Aorta (tissue), 5 donors: ENCODE measurements at regions of chr5 and their contacts with region 1.

Region 1: GRCh38 chr5:146426853-146427618 is 20.1 kb upstream of the TCERG1 start:
- DNase-seq: no peak
- ATAC-seq: peak; percentile 70
- H3K4me3 ChIP-seq: no peak overlapping the region
- H3K27ac ChIP-seq: peak overlapping the region in 1 of 2 donors; percentile 6
- H3K4me1 ChIP-seq: no peaks in the 10 kb centered on the region
- H3K27me3 ChIP-seq: peaks cover 0 to 5% of the 10 kb centered on the region in 2 donors

Region 2: DNA sequence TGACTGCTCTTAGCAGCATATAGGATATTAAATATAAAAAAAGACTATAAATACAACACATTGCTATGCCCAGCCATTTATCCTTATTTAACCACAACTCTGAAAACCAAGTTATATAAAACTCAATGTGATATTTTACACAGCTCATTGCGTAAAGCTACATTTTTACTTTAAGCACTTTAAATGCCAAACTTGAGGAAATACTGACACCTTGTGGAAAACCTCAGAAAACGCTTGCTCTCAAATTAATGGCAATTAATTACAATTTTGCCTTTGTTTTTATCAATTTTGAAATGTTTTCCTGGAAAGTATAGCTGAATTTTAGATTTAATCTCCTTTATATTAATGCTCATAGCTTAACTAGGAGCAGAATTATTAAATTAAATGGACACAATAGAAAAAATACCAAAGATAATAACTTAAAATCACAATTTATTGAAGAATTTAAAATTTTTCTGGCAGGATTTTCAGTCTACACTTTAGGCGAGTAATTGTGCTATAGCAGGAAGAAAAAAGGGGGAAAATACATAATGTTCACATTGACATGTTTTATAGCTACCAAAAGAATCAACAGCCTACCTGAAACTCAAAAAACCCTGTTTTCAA is 296.5 kb before region 1 on chr5:
- intact Hi-C with region 1: loop called in 1 of 2 experiments (anchors 10 kb)
- DNase-seq: no peak
- ATAC-seq: no peak
- H3K4me3 ChIP-seq: no peak overlapping the region
- H3K27ac ChIP-seq: no peak overlapping the region
- H3K4me1 ChIP-seq: no peaks in the 10 kb centered on the region
- H3K27me3 ChIP-seq: no peaks in the 10 kb centered on the region

Region 3: GRCh38 chr5:146137967-146138403 is 289.1 kb before region 1 on chr5:
- intact Hi-C with region 1: loop called (anchors 10 kb)
- DNase-seq: no peak
- ATAC-seq: no peak
- H3K4me3 ChIP-seq: no peak overlapping the region
- H3K27ac ChIP-seq: no peak overlapping the region
- H3K4me1 ChIP-seq: no peaks in the 10 kb centered on the region
- H3K27me3 ChIP-seq: no peaks in the 10 kb centered on the region

Region 4: DNA sequence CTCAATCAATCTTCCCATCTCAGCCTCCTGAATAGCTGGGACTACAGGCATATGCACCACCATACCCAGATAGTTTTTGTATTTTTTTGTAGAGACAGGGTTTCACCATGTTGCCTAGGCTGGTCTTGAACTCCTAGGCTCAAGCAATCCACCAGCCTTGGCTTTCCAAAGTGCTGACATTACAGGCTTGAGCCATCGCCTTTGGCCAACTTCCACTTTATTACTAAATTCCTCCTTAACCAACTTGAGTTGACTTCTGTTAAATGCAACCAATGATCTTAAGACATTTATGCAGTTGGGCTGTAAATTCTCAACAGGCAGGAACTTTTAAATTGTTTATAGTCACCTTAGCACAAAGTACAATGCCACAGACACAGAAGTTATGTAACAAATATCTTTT is 247.3 kb before region 1 on chr5:
- intact Hi-C with region 1: loop called (anchors 5 to 10 kb)
- DNase-seq: no peak
- ATAC-seq: no peak
- H3K4me3 ChIP-seq: no peak overlapping the region
- H3K27ac ChIP-seq: no peak overlapping the region
- H3K4me1 ChIP-seq: peaks cover 1 to 3% of the 10 kb centered on the region in 2 donors
- H3K27me3 ChIP-seq: no peaks in the 10 kb centered on the region

Region 5: GRCh38 chr5:146188358-146188757 is 238.7 kb before region 1 on chr5:
- intact Hi-C with region 1: loop called (anchors 5 to 10 kb)
- DNase-seq: no peak
- ATAC-seq: no peak
- H3K4me3 ChIP-seq: no peak overlapping the region
- H3K27ac ChIP-seq: no peak overlapping the region
- H3K4me1 ChIP-seq: no peaks in the 10 kb centered on the region
- H3K27me3 ChIP-seq: no peaks in the 10 kb centered on the region

Region 6: GRCh38 chr5:146291421-146292074 is 135.5 kb before region 1 on chr5:
- intact Hi-C with region 1: loop called (anchors 5 kb)
- DNase-seq: no peak
- ATAC-seq: no peak
- H3K4me3 ChIP-seq: no peak overlapping the region
- H3K27ac ChIP-seq: no peak overlapping the region
- H3K4me1 ChIP-seq: no peaks in the 10 kb centered on the region
- H3K27me3 ChIP-seq: no peaks in the 10 kb centered on the region

Region 7: DNA sequence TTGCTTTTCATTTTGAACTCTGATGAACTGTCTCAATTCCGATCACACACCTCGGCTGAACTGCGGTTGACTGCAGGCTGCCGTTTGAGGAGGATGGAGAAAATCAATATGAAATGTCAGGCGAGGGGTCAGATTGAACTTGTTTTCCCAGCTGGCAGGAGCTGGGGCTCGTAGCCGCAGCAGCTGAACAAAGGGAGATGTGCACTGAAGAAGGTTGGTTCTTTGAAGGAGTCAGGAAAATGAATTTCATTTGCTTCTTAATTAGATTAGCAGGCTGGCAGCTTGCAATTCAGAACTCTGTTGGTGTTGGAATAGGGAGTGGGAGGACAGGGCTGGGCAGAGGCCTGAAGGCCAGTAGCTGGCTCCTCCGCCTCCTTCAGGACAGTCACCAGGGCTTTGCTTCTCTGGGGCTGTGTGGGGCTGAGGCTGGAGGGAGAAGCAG is 206.3 kb after region 1 on chr5:
- intact Hi-C with region 1: no loop called
- DNase-seq: no peak
- ATAC-seq: no peak
- H3K4me3 ChIP-seq: no peak overlapping the region
- H3K27ac ChIP-seq: no peak overlapping the region
- H3K4me1 ChIP-seq: no peaks in the 10 kb centered on the region
- H3K27me3 ChIP-seq: no peaks in the 10 kb centered on the region